Naive thymus-derived CD4-positive, alpha-beta T cell (primary cell): ENCODE measurements at regions of chr14 and their contacts with region 1.

Region 1: GRCh38 chr14:24114536-24115450 is at the starts of genes DCAF11 and NRL:
- DNase-seq: peak; percentile 97 to 100 (median 100)
- ATAC-seq: peak; percentile 90
- H3K4me3 ChIP-seq: peak within 1 kb of the TSS; percentile 99
- H3K4me3 Mint-ChIP-seq: peak within 1 kb of the TSS; percentile 93 to 100 (median 96)
- H3K27ac ChIP-seq: peak within 1 kb of the TSS; percentile 93
- H3K27ac Mint-ChIP-seq: peak within 1 kb of the TSS; percentile 96 to 100 (median 99)
- H3K4me1 ChIP-seq: peaks cover 18 to 20% of the 10 kb centered on the region in 2 donors
- H3K4me1 Mint-ChIP-seq: peaks cover 18 to 44% (median 37%) of the 10 kb centered on the region in 7 donors
- H3K27me3 ChIP-seq: no peaks in the 10 kb centered on the region
- H3K27me3 Mint-ChIP-seq: peaks cover 0 to 3% (median 0%) of the 10 kb centered on the region in 5 donors
- total RNA-seq, gene DCAF11: 71.9 to 90.1 (median 83.3) TPM
- total RNA-seq, gene NRL: 2.1 to 4.5 (median 3.8) TPM

Region 2: GRCh38 chr14:23095196-23096108 is 1019.3 kb before region 1 on chr14 and contains the start of gene C14orf119:
- CTCF ChIA-PET with region 1: no interaction called
- POLR2A ChIA-PET with region 1: no interaction called
- intact Hi-C with region 1: loop called (anchors 10 kb)
- DNase-seq: peak in 8 of 9 donors; percentile 88 to 100 (median 100)
- ATAC-seq: peak; percentile 93
- H3K4me3 ChIP-seq: peak within 1 kb of the TSS; percentile 88
- H3K4me3 Mint-ChIP-seq: no peak within 1 kb of the TSS
- H3K27ac ChIP-seq: peak within 1 kb of the TSS; percentile 97
- H3K27ac Mint-ChIP-seq: no peak within 1 kb of the TSS
- H3K4me1 ChIP-seq: peaks cover 26 to 32% of the 10 kb centered on the region in 2 donors
- H3K4me1 Mint-ChIP-seq: peaks cover 3 to 63% (median 33%) of the 10 kb centered on the region in 7 donors
- H3K27me3 ChIP-seq: no peaks in the 10 kb centered on the region
- H3K27me3 Mint-ChIP-seq: no peaks in the 10 kb centered on the region
- total RNA-seq, gene C14orf119: 6.0 to 49.9 (median 43.4) TPM

Region 3: GRCh38 chr14:24013654-24014514 is 100.9 kb before region 1 on chr14:
- CTCF ChIA-PET with region 1: interaction called, 5 read pairs
- POLR2A ChIA-PET with region 1: no interaction called
- intact Hi-C with region 1: loop called in 1 of 2 experiments (anchors 1 kb)
- DNase-seq: peak in 8 of 9 donors; percentile 17 to 76 (median 67)
- ATAC-seq: peak; percentile 94
- H3K4me3 ChIP-seq: no peak overlapping the region
- H3K4me3 Mint-ChIP-seq: no peak overlapping the region
- H3K27ac ChIP-seq: no peak overlapping the region
- H3K27ac Mint-ChIP-seq: no peak overlapping the region
- H3K4me1 ChIP-seq: peaks cover 0 to 6% of the 10 kb centered on the region in 2 donors
- H3K4me1 Mint-ChIP-seq: peaks cover 8 to 28% (median 25%) of the 10 kb centered on the region in 7 donors
- H3K27me3 ChIP-seq: no peaks in the 10 kb centered on the region
- H3K27me3 Mint-ChIP-seq: peaks cover 0 to 15% (median 0%) of the 10 kb centered on the region in 5 donors

Region 4: GRCh38 chr14:24135834-24136542 is 21.2 kb after region 1 on chr14 and contains the start of gene PSME1:
- CTCF ChIA-PET with region 1: interaction called, 11 read pairs
- POLR2A ChIA-PET with region 1: interaction called, 298 read pairs
- intact Hi-C with region 1: loop called (anchors 1 kb)
- DNase-seq: peak; percentile 88 to 97 (median 92)
- ATAC-seq: peak; percentile 99
- H3K4me3 ChIP-seq: peak within 1 kb of the TSS; percentile 83
- H3K4me3 Mint-ChIP-seq: peak within 1 kb of the TSS; percentile 88 to 95 (median 92)
- H3K27ac ChIP-seq: peak within 1 kb of the TSS; percentile 97
- H3K27ac Mint-ChIP-seq: peak within 1 kb of the TSS; percentile 86 to 98 (median 93)
- H3K4me1 ChIP-seq: peaks cover 16 to 37% of the 10 kb centered on the region in 2 donors
- H3K4me1 Mint-ChIP-seq: peaks cover 48 to 71% (median 64%) of the 10 kb centered on the region in 7 donors
- H3K27me3 ChIP-seq: no peaks in the 10 kb centered on the region
- H3K27me3 Mint-ChIP-seq: no peaks in the 10 kb centered on the region
- total RNA-seq, gene PSME1: 189 to 583 (median 202) TPM

Region 5: DNA sequence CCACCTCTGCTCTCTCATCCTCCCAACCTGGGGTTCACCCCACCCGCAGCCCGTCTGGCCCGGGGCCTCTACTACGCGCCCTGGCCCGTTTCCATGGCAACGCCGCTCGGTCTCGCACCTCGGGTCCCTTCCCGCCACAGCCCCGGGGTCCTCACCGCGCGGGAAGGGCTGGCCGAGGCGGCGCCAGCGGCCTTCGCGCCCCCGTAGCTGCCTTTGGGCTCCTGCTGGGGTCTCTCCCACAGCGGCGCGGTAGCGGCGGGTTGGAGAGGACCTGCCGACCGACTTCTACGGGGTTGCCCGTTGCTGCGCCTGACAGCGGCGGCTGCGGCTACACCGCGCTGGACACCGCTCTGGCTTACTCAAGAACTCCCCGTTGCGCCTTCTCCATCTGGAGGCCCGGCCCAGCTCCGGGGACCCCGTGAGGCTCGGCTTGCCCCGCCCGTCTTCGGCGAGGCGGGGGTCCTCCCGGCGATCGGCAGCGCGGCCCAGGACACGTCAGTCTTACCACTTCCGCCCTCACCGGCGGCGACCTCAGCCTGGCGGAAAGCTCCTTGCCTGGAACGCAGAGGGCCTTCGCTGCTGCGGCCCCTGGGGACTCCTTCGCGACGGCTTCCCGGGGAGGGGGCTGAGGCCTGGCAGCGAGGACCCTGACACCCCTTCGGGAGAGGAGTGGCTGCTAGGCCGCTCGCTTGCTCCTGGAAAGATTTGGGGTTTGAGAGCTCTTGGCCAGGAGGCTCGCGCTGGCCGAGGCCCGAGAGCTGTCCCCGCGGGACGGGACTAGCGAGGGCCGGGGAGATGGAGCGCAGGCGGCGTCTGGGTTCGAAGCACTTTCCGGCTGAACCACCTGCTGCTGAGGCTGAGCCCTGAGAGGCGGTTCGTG is 80.6 kb after region 1 on chr14 and contains the start of gene TM9SF1:
- CTCF ChIA-PET with region 1: no interaction called
- POLR2A ChIA-PET with region 1: interaction called, 21 read pairs
- intact Hi-C with region 1: loop called in 1 of 2 experiments (anchors 1 kb)
- DNase-seq: peak; percentile 86 to 92 (median 90)
- ATAC-seq: peak; percentile 90
- H3K4me3 ChIP-seq: peak within 1 kb of the TSS; percentile 74
- H3K4me3 Mint-ChIP-seq: peak within 1 kb of the TSS; percentile 88 to 97 (median 93)
- H3K27ac ChIP-seq: peak within 1 kb of the TSS; percentile 99
- H3K27ac Mint-ChIP-seq: peak within 1 kb of the TSS; percentile 88 to 98 (median 98)
- H3K4me1 ChIP-seq: peaks cover 14 to 16% of the 10 kb centered on the region in 2 donors
- H3K4me1 Mint-ChIP-seq: peaks cover 38 to 69% (median 59%) of the 10 kb centered on the region in 7 donors
- H3K27me3 ChIP-seq: no peaks in the 10 kb centered on the region
- H3K27me3 Mint-ChIP-seq: no peaks in the 10 kb centered on the region
- total RNA-seq, gene TM9SF1: 16.2 to 40.5 (median 19.2) TPM

Region 6: GRCh38 chr14:24286996-24287395 is 172.2 kb after region 1 on chr14:
- CTCF ChIA-PET with region 1: no interaction called
- POLR2A ChIA-PET with region 1: no interaction called
- intact Hi-C with region 1: no loop called
- DNase-seq: no peak
- ATAC-seq: no peak
- H3K4me3 ChIP-seq: no peak overlapping the region
- H3K4me3 Mint-ChIP-seq: no peak overlapping the region
- H3K27ac ChIP-seq: no peak overlapping the region
- H3K27ac Mint-ChIP-seq: peak overlapping the region in 1 of 9 donors; percentile 32
- H3K4me1 ChIP-seq: no peaks in the 10 kb centered on the region
- H3K4me1 Mint-ChIP-seq: peaks cover 0 to 17% (median 3%) of the 10 kb centered on the region in 7 donors
- H3K27me3 ChIP-seq: no peaks in the 10 kb centered on the region
- H3K27me3 Mint-ChIP-seq: peaks cover 0 to 2% (median 0%) of the 10 kb centered on the region in 5 donors

Region 7: DNA sequence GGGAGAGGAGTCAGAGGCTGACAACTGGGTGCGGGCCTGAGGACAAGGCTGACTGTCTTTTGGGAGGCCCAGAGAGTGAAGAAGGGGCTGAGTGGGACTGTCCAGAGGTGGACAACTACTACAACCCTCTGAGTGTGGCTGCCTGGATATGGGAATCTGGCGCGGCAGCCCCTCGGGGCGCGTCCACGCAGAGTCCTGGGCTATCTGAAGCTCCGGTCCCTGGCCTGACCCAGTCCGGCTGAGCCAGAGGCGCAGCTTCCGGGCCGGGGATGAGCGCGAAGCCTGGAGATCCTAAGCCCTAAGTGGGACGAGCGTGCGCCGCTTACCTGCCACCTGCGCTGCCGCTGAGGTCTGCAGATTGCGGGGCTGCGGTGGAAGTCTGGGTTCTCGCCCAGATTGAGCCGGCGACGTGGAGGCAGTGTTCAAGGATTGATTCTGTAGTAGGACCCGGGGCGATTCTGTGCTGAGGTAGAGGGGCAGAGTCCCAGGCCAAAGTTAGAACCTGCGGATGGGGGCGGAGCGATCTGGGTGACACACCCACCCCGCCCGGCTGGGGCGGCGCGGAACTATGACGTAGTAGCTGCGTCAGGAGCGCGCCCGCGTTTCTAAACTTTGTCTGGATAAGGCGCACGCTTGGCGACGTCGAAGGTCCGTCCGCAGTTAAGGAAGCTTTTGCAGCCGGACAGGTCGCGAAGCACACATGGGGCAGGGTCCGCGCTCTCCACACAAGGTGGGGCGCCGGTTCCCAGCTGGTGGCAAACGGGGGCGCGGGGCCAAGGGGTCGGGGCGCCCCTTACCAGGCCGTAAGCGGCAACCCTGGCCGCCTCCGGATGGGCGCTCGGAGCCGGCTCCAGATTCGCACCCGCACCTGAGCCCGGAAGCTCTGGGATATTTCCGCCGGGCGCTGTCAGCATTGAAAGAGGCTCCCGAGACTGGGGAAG is 184.7 kb after region 1 on chr14 and contains the starts of genes DHRS1 and NOP9:
- CTCF ChIA-PET with region 1: no interaction called
- POLR2A ChIA-PET with region 1: no interaction called
- intact Hi-C with region 1: loop called in 1 of 2 experiments (anchors 1 kb)
- DNase-seq: peak; percentile 86 to 95 (median 92)
- ATAC-seq: peak; percentile 93
- H3K4me3 ChIP-seq: peak within 1 kb of the TSS; percentile 83
- H3K4me3 Mint-ChIP-seq: peak within 1 kb of the TSS; percentile 89 to 97 (median 94)
- H3K27ac ChIP-seq: peak within 1 kb of the TSS; percentile 97
- H3K27ac Mint-ChIP-seq: peak within 1 kb of the TSS; percentile 91 to 98 (median 96)
- H3K4me1 ChIP-seq: peaks cover 19 to 43% of the 10 kb centered on the region in 2 donors
- H3K4me1 Mint-ChIP-seq: peaks cover 28 to 67% (median 55%) of the 10 kb centered on the region in 7 donors
- H3K27me3 ChIP-seq: no peaks in the 10 kb centered on the region
- H3K27me3 Mint-ChIP-seq: no peaks in the 10 kb centered on the region
- total RNA-seq, gene DHRS1: 25.2 to 37.0 (median 33.3) TPM
- total RNA-seq, gene NOP9: 22.7 to 39.5 (median 29.8) TPM